ENCODE measurements at regions of chr4 and their contacts with region 1.

Region 1: DNA sequence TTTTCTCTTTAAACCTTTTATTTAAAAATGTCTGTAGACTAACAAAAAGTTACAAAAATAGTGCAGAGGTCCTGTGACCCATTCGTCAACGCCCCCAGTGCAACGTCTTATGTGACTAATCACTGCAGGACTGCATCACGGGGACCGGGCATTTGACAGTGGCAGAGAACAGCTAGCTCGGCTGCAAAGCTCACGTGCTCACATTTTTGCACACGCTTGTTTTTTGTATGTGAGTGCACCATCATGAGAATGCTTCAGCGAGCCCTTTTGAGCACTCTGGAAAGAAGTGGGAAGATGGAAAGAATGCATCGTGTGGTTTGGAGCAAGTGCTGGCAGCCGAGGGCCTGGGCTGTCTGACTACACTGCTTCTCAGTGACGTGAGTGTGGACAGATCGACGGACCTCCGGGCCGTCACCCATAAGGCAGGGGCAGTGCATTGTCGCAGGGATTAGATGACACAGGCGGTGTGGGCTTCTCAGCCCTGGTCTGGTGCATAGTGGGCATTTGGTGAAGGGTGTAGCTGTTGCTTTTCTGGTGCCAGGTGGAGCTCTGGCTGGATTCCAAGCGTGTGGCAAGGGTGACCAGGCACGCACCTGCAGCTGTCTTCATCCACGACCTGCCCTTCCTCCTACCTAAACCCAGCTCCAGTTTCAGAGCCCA is 17.7 kb downstream of the SPON2 start:
- DNase-seq: no peak
- ATAC-seq: peak; percentile 26 to 65
- H3K4me3 ChIP-seq: no peak overlapping the region
- H3K27ac ChIP-seq: no peak overlapping the region
- H3K4me1 ChIP-seq: peaks cover 6 to 9% of the 10 kb centered on the region in 2 donors
- H3K27me3 ChIP-seq: peaks cover 0 to 3% (median 0%) of the 10 kb centered on the region in 3 donors
- CTCF ChIP-seq: no peak
- POLR2A ChIP-seq: no peak

Region 2: DNA sequence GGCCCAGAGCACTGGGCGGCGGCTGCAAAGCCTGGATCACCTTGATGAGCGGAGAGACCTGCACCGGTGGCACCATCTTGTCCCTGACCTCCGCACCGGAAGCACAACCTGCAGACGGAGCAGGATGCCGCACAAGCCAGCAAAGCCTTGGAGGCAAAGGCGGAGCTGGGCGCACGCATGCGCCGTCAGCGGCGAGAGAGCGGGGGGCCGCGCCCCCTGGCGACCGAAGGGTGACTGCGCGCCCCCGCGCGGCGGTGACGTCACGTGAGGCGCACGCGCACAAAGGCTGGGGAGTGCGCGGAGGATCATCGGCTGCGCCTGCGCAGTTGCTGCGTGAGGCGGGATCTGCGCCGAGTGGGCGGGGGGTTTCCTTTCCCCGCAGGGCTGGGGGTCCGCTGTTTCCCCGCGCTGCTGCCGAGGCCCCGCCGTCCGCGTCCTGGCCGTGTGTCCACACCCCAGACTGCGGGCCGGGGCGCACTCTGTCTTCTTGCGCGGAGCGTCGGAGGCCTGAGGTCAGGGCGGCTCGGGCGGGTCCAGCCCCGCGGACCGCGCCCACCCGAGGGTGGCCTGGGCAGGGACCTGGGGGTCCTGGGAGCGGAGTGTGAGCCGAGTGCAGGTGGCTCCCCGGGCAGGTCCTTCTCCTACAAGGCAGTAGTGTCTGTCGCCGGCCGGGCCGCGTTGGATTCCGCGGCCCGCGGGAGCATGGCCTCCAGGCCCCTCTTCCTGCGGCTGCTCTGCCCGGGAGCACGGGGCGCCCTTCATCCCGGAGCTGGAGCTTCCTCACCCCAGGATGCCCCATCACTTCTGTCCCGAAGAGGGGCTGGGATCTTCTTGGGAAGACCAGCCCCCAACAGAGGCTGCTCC is 480.2 kb before region 1 on chr4 and contains the starts of genes ATP5ME and MYL5:
- in situ Hi-C with region 1: no loop called
- intact Hi-C with region 1: no loop called
- DNase-seq: peak; percentile 94 to 96
- ATAC-seq: peak; percentile 91 to 94
- H3K4me3 ChIP-seq: peak within 1 kb of the TSS; percentile 88 to 99 (median 98)
- H3K27ac ChIP-seq: peak within 1 kb of the TSS; percentile 90 to 99 (median 97)
- H3K4me1 ChIP-seq: peaks cover 31 to 48% of the 10 kb centered on the region in 2 donors
- H3K27me3 ChIP-seq: peaks cover 0 to 5% (median 0%) of the 10 kb centered on the region in 3 donors
- CTCF ChIP-seq: peak; percentile 79 to 97 (median 88)
- POLR2A ChIP-seq: peak; percentile 79 to 93
- total RNA-seq, gene ATP5ME: 24.7 to 172 (median 91.5) TPM
- total RNA-seq, gene MYL5: 1.3 to 20.3 (median 3.6) TPM

Region 3: DNA sequence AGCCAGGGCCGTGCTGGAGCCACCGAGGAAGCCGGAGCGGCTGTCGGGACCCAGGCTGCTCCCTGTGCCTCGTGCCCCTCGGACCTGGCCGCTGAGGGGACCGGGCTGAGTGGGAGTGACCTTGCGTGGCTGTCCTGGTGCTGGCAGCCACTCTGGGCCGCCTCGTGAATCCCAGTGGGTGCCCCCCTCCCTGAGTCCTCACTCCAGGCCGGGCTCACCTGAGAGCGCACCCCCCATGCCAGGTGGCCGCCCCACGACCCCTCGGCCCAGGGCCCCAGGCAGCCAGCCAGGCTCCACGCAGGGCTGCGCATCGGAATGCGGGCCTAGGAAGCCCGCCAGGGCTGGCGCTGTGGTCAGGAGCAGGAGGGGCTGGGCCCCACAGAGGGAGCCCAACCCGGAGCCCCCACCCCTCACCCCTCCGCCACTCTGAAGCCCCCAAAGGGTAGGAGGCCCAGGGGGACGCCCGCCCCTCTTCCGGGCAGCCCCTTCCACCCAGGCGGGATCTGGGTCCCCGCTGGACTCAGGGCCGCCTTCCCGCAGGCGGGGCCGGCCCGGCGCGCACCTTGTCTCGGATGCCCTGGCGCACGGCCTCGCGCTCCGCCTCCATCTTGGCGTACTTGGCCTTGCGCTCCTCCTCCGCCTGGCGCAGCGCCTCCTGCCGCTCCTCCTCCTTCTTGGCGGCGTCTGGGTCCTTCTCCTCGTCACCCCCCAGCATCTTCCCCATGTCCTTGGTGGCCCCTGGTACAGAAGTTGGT is 362.6 kb before region 1 on chr4:
- in situ Hi-C with region 1: no loop called
- intact Hi-C with region 1: no loop called
- DNase-seq: no peak
- ATAC-seq: no peak
- H3K4me3 ChIP-seq: peak overlapping the region in 1 of 4 donors; percentile 6
- H3K27ac ChIP-seq: no peak overlapping the region
- H3K4me1 ChIP-seq: peaks cover 4 to 7% of the 10 kb centered on the region in 2 donors
- H3K27me3 ChIP-seq: peaks cover 53 to 65% (median 61%) of the 10 kb centered on the region in 3 donors
- CTCF ChIP-seq: no peak
- POLR2A ChIP-seq: no peak

Region 4: DNA sequence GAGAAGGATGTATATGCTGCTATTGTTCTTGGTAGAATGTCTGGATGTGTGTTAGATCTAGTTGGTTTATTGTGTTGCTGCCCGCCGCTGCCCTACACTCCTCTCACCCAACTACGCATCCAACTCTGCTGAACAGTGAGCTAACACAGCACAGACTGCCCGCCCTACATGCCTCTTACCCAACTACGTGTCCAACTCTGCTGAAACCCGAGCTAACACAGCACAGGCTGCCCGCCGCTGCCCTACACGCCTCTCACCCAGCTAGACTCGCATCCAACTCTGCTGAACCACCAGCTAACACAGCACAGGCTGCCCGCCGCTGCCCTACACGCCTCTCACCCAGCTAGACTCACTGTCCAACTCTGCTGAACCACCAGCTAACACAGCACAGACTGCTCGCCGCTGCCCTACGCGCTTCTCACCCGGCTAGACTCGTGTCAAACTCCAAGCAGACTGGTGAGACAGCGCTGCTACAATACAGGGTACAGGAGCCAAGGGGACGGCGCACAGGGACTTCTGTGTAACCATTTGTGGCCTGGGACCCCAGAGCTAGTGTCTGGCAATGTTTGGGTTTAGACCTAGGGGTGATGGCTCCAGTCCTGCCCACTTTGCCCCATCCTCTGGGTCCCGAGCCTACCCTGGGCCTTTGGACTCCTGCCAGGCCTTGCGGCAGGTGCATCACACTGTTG is 105.9 kb after region 1 on chr4:
- in situ Hi-C with region 1: loop called in 1 of 4 experiments (anchors 10 kb)
- intact Hi-C with region 1: no loop called
- DNase-seq: no peak
- ATAC-seq: no peak
- H3K4me3 ChIP-seq: no peak overlapping the region
- H3K27ac ChIP-seq: peak overlapping the region in 1 of 4 donors; percentile 13
- H3K4me1 ChIP-seq: no peaks in the 10 kb centered on the region
- H3K27me3 ChIP-seq: no peaks in the 10 kb centered on the region
- CTCF ChIP-seq: no peak
- POLR2A ChIP-seq: no peak

Measured in gastrocnemius medialis (tissue), 4 donors.